T-cell (primary cell): ENCODE measurements at regions of chr16 and their contacts with region 1.

Region 1: DNA sequence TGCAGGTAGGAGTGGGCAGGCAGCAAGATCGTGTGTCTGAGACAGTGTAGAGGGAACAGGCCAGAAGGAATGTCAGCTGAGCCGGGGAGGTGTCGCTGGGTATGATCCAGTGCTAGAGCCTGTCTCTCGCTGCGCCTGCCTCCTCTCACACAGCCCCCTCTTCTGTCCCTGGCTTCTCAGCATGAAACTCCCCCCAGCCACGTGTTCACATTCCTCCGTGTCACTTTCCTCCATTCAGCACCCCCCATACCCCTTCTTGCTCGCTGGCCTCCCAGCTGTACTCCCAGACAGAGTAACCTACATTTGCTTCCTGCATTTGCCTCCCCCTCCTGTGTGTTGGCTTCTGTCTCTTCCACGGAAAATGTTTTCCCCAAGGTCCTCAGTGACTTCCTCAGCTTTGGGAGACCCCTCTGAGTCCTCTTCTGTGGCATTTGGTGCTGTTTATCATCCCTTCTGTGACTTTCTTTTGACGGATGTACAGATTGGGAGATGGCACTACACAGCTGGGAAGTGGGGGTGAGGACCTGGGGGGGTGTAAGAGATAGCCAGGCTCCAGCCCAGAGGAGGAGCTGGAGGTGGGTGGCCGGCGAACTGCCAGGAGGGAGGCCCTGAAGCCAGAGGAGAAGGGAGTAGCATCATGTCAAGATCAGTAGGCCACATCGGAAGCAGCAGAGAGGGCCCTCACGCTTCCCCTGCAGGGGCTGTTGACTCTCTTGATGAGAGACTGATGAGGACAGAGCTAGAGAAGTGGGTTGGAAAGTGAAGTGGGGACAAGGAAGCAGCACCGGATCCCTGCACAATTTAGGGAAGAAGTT is 19.2 kb downstream of the SGF29 start:
- DNase-seq: no peak
- ATAC-seq: no peak
- H3K4me3 ChIP-seq: no peak overlapping the region
- H3K4me3 Mint-ChIP-seq: no peak overlapping the region
- H3K27ac ChIP-seq: no peak overlapping the region
- H3K27ac Mint-ChIP-seq: no peak overlapping the region
- H3K4me1 ChIP-seq: no peaks in the 10 kb centered on the region
- H3K4me1 Mint-ChIP-seq: peaks cover 31 to 45% (median 41%) of the 10 kb centered on the region in 3 donors
- H3K27me3 ChIP-seq: no peaks in the 10 kb centered on the region
- H3K27me3 Mint-ChIP-seq: no peaks in the 10 kb centered on the region

Region 2: GRCh38 chr16:28597692-28598261 is 24.9 kb after region 1 on chr16:
- CTCF ChIA-PET with region 1: no interaction called
- POLR2A ChIA-PET with region 1: no interaction called
- DNase-seq: no peak
- ATAC-seq: no peak
- H3K4me3 ChIP-seq: no peak overlapping the region
- H3K4me3 Mint-ChIP-seq: no peak overlapping the region
- H3K27ac ChIP-seq: no peak overlapping the region
- H3K27ac Mint-ChIP-seq: no peak overlapping the region
- H3K4me1 ChIP-seq: peaks cover 2% of the 10 kb centered on the region in 2 experiments
- H3K4me1 Mint-ChIP-seq: no peaks in the 10 kb centered on the region
- H3K27me3 ChIP-seq: peaks cover 0 to 3% of the 10 kb centered on the region in 2 experiments
- H3K27me3 Mint-ChIP-seq: no peaks in the 10 kb centered on the region

Region 3: DNA sequence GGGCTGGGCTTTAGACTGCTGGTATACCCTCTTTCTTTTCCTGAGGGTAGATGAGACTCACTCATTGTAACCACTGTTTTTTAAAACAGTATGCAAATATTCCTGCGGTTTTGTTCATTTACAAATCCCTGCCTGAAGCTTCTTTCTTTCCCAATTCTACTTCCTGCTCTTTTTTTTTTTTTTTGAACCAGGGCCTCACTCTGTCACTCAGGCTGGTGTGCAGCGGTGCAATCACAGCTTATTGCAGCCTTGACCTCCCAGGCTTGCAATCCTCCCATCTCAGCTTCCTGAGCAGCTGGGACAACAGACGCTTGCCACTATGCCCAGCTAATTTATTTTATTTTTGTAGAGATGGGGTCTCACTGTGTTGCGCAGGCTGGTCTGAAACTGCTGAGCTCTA is 45.0 kb after region 1 on chr16:
- CTCF ChIA-PET with region 1: no interaction called
- POLR2A ChIA-PET with region 1: interaction called in 1 of 2 experiments, 14 read pairs
- DNase-seq: no peak
- ATAC-seq: no peak
- H3K4me3 ChIP-seq: no peak overlapping the region
- H3K4me3 Mint-ChIP-seq: no peak overlapping the region
- H3K27ac ChIP-seq: no peak overlapping the region
- H3K27ac Mint-ChIP-seq: no peak overlapping the region
- H3K4me1 ChIP-seq: peaks cover 0 to 8% of the 10 kb centered on the region in 2 experiments
- H3K4me1 Mint-ChIP-seq: peaks cover 13 to 19% (median 15%) of the 10 kb centered on the region in 3 donors
- H3K27me3 ChIP-seq: no peaks in the 10 kb centered on the region
- H3K27me3 Mint-ChIP-seq: no peaks in the 10 kb centered on the region